BJ (cell line): ENCODE measurements at regions of chr3 and their contacts with region 1.

Region 1: DNA sequence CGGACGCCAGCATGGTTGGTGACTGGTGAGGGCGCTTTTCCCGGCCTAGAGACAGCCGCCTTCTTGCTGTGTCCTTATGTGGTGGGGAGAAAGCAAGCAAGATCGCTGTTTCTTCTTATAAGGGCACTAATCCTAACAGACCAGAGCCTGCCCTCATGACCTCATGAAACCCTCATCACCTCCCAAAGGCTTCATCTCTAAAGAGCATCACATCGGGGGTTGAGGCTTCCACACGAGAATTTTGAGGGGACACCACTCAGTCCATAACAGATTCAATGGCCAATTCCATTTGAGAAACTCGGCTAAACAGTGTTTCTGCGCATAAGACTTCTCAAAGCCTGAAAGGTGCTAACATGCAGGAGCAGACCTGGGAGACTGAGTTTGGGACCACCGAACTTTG is 54.0 kb downstream of the VGLL4 start:
- DNase-seq: no peak
- H3K4me3 ChIP-seq: no peak overlapping the region
- H3K27me3 ChIP-seq: no peaks in the 10 kb centered on the region
- CTCF ChIP-seq: no peak

Region 2: GRCh38 chr3:11606865-11607440 is 17.2 kb after region 1 on chr3:
- CTCF ChIA-PET with region 1: no interaction called
- POLR2A ChIA-PET with region 1: interaction called, 11 read pairs
- DNase-seq: no peak
- H3K4me3 ChIP-seq: no peak overlapping the region
- H3K27me3 ChIP-seq: no peaks in the 10 kb centered on the region
- CTCF ChIP-seq: no peak

Region 3: DNA sequence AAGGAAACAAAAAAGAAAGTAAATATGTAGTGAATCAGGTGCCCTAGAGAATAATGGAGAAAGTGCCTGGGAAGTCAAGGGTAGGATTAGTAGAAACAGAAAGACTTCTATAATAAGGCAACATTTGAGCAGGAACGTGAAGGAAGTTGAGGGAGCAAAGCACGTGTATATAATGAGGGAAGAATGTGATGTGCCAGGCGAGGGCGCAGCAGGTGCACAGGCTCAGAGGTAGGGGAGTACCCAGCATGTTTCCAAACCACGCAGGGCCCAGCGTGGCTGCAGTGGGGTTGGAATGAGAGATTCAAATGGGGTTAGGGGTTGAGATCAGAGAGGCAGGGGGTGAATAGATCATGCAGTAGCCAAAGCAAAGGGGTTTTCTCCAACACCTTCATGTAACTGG is 145.9 kb after region 1 on chr3:
- CTCF ChIA-PET with region 1: no interaction called
- POLR2A ChIA-PET with region 1: no interaction called
- DNase-seq: no peak
- H3K4me3 ChIP-seq: no peak overlapping the region
- H3K27me3 ChIP-seq: peaks cover 17% of the 10 kb centered on the region
- CTCF ChIP-seq: no peak